CD4-positive, alpha-beta T cell (primary cell): ENCODE measurements at regions of chr12 and their contacts with region 1.

Region 1: GRCh38 chr12:89862511-89863179 is 154.0 kb upstream of the ATP2B1 start:
- DNase-seq: peak; percentile 18 to 88 (median 34)
- ATAC-seq: peak; percentile 24
- H3K4me3 ChIP-seq: peak overlapping the region; percentile 35
- H3K4me3 Mint-ChIP-seq: peak overlapping the region; percentile 66
- H3K27ac ChIP-seq: peak overlapping the region; percentile 76 to 88
- H3K27ac Mint-ChIP-seq: peak overlapping the region; percentile 87
- H3K4me1 ChIP-seq: peaks cover 36% of the 10 kb centered on the region
- H3K4me1 Mint-ChIP-seq: peaks cover 71% of the 10 kb centered on the region
- H3K27me3 ChIP-seq: no peaks in the 10 kb centered on the region
- H3K27me3 Mint-ChIP-seq: no peaks in the 10 kb centered on the region
- CTCF ChIP-seq: no peak

Region 2: DNA sequence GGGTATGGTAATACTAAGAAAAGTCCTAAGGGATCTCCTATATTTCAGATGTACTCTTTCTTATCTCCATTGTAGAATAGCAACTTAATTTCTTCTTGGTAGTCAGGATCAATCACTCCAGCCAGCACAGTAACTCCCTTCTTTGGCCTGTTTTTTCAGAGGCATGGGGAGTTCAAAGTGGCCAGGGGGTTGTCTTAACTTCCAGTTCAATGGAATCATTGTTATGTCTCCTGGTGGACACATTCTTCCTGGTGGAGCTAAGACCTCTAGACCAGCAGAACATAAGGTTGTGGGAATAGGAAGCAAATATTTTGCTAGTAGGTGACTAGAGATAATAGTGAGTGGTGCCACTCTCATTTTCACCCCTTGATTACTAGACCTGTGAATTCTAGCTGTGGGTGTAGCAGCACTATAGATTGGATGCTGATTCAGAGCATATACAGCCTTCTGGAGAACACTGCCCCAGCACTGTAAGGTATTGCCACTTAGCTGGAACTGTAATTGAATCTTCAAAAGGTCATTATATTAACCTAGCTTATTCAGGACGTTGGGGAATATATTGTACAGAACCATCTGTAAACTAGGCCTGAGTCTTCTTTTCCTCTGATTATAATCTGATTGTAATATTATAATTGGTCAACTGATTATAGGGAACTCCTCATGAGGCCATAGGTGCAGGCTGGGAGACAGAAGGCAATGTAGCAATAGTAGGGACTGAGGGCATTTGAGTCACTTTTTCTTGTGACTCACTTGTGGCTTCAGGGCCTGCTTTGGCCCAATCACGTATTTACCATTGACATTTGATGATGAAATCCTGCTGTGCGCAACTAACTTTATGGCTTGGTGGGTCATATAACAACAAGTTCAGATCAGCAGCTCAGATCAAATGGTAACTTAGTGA is 93.8 kb before region 1 on chr12:
- CTCF ChIA-PET with region 1: no interaction called
- POLR2A ChIA-PET with region 1: interaction called, 5 read pairs
- intact Hi-C with region 1: loop called in 1 of 2 experiments (anchors 10 kb)
- DNase-seq: peak in 2 of 14 experiments; percentile 61 to 75
- ATAC-seq: no peak
- H3K4me3 ChIP-seq: no peak overlapping the region
- H3K4me3 Mint-ChIP-seq: no peak overlapping the region
- H3K27ac ChIP-seq: no peak overlapping the region
- H3K27ac Mint-ChIP-seq: no peak overlapping the region
- H3K4me1 ChIP-seq: peaks cover 13% of the 10 kb centered on the region
- H3K4me1 Mint-ChIP-seq: peaks cover 38% of the 10 kb centered on the region
- H3K27me3 ChIP-seq: no peaks in the 10 kb centered on the region
- H3K27me3 Mint-ChIP-seq: no peaks in the 10 kb centered on the region
- CTCF ChIP-seq: no peak

Region 3: GRCh38 chr12:89873745-89874144 is 11.1 kb after region 1 on chr12:
- CTCF ChIA-PET with region 1: no interaction called
- POLR2A ChIA-PET with region 1: interaction called, 24 read pairs
- intact Hi-C with region 1: no loop called
- DNase-seq: no peak
- ATAC-seq: no peak
- H3K4me3 ChIP-seq: no peak overlapping the region
- H3K4me3 Mint-ChIP-seq: no peak overlapping the region
- H3K27ac ChIP-seq: no peak overlapping the region
- H3K27ac Mint-ChIP-seq: no peak overlapping the region
- H3K4me1 ChIP-seq: no peaks in the 10 kb centered on the region
- H3K4me1 Mint-ChIP-seq: peaks cover 19% of the 10 kb centered on the region
- H3K27me3 ChIP-seq: no peaks in the 10 kb centered on the region
- H3K27me3 Mint-ChIP-seq: no peaks in the 10 kb centered on the region
- CTCF ChIP-seq: no peak

Region 4: DNA sequence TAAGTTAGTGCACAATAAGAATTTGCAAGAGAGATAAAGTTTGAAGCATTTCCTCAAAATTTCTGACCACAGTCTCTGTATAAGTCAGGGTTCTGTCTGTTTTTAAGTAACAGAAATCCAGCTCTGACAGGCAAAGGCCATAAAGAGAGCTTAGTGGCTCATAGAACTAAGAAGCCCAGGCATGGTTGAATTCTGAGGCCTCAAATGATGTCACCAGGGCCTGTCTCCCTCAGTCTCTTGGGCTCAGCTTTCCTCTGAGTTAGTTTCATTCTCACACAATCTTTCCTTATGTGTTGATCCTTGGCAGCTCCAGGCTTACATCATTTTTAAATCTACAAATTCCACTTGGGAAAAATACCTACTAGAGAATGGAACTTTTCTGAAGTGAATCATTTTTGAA is 19.4 kb after region 1 on chr12:
- CTCF ChIA-PET with region 1: no interaction called
- POLR2A ChIA-PET with region 1: interaction called, 24 read pairs
- intact Hi-C with region 1: loop called in 1 of 2 experiments (anchors 1 kb)
- DNase-seq: peak in 4 of 14 experiments; percentile 29 to 52 (median 44)
- ATAC-seq: no peak
- H3K4me3 ChIP-seq: no peak overlapping the region
- H3K4me3 Mint-ChIP-seq: peak overlapping the region; percentile 60
- H3K27ac ChIP-seq: peak overlapping the region; percentile 13 to 73
- H3K27ac Mint-ChIP-seq: peak overlapping the region; percentile 95
- H3K4me1 ChIP-seq: peaks cover 17% of the 10 kb centered on the region
- H3K4me1 Mint-ChIP-seq: peaks cover 64% of the 10 kb centered on the region
- H3K27me3 ChIP-seq: no peaks in the 10 kb centered on the region
- H3K27me3 Mint-ChIP-seq: no peaks in the 10 kb centered on the region
- CTCF ChIP-seq: no peak

Region 5: GRCh38 chr12:89927226-89927698 is 64.6 kb after region 1 on chr12:
- CTCF ChIA-PET with region 1: no interaction called
- POLR2A ChIA-PET with region 1: no interaction called
- intact Hi-C with region 1: loop called in 1 of 2 experiments (anchors 5 kb)
- DNase-seq: peak in 3 of 14 experiments; percentile 44 to 51 (median 50)
- ATAC-seq: no peak
- H3K4me3 ChIP-seq: no peak overlapping the region
- H3K4me3 Mint-ChIP-seq: no peak overlapping the region
- H3K27ac ChIP-seq: no peak overlapping the region
- H3K27ac Mint-ChIP-seq: no peak overlapping the region
- H3K4me1 ChIP-seq: no peaks in the 10 kb centered on the region
- H3K4me1 Mint-ChIP-seq: peaks cover 11% of the 10 kb centered on the region
- H3K27me3 ChIP-seq: no peaks in the 10 kb centered on the region
- H3K27me3 Mint-ChIP-seq: no peaks in the 10 kb centered on the region
- CTCF ChIP-seq: no peak

Region 6: DNA sequence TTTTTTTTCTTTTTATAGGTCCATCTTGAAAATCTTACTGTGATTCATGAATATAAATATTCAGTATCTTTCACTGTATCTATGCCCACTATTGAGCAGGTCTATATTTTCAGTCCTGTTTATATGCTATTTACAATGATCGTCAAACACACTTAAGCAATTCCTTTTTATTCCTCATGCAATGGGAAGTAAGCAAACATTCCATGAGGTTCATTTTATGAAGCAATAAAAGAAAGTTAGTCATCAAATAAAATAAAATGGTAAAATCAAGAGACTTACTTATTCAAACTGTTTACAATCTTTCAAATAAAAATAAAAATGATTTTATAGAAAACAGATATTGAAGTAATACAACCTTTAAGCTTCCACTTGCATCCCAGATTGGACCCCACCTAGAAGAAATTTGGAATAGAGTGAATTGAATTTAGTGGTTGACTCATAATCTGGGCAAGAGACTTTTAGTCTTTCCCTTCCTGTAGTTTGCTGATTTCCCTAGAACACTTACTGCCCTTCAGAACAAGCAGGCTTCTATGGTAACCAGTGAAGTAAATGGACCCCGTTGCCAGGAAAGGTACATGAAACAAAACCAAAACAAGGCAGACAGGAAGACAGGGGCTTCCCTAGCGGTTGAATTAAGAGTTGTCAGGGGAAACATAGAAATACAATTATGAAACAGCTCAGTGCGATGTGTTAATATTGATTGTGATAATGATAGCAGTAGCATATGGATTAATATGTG is 87.0 kb after region 1 on chr12:
- CTCF ChIA-PET with region 1: interaction called, 5 read pairs
- POLR2A ChIA-PET with region 1: interaction called, 15 read pairs
- intact Hi-C with region 1: loop called in 1 of 2 experiments (anchors 1 kb)
- DNase-seq: peak in 11 of 14 experiments; percentile 15 to 94 (median 39)
- ATAC-seq: peak; percentile 91
- H3K4me3 ChIP-seq: no peak overlapping the region
- H3K4me3 Mint-ChIP-seq: peak overlapping the region; percentile 35
- H3K27ac ChIP-seq: peak overlapping the region in 1 of 2 donors; percentile 78
- H3K27ac Mint-ChIP-seq: peak overlapping the region; percentile 61
- H3K4me1 ChIP-seq: peaks cover 18% of the 10 kb centered on the region
- H3K4me1 Mint-ChIP-seq: peaks cover 55% of the 10 kb centered on the region
- H3K27me3 ChIP-seq: no peaks in the 10 kb centered on the region
- H3K27me3 Mint-ChIP-seq: no peaks in the 10 kb centered on the region
- CTCF ChIP-seq: peak; percentile 58